ENCODE measurements at regions of chr7 and their contacts with region 1.

Region 1: GRCh38 chr7:29105752-29106668 is 40.3 kb downstream of the CPVL start:
- DNase-seq: no peak
- H3K4me3 ChIP-seq: no peak overlapping the region
- H3K27ac ChIP-seq: no peak overlapping the region
- H3K4me1 ChIP-seq: no peaks in the 10 kb centered on the region
- H3K27me3 ChIP-seq: no peaks in the 10 kb centered on the region
- CTCF ChIP-seq: peak; percentile 57 to 77 (median 72)
- EP300 ChIP-seq: no peak
- POLR2A ChIP-seq: no peak

Region 2: DNA sequence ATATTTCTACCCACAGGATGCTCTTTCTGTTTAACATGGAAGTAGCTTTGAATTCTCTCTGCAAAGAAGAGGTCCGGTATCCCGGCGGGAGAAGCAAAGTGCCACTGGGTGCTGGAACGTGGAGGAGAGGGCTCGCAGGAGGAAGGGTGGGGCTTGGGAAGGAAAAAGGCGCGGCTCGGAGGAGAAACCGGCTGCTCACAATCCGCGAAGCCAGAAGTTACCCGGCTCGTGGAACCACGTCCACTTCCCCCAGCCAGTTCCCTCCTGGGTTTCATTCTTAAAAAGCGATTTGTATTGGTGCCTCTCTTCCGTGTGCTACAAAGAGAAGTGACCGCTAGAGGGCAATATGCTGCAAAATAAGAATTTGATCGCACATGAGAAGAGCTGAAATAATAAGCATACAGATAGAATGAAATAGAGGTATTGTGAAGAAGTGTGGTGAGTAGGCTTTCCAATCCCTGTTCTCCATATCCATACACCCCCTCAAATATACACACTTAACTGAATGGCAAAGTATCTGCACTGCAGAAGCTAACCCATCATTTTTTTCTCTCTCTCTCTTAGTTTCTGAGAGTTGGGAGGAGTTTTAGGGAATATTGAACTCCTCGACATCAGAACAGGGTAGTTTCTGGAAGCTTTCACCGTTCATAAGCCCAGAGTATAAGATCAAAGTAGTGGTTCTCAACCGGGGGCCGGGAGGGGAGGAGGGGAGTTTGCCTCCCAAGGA is 179.0 kb before region 1 on chr7:
- intact Hi-C with region 1: loop called (anchors 1 kb)
- DNase-seq: peak; percentile 85
- H3K4me3 ChIP-seq: peak overlapping the region; percentile 13 to 52 (median 50)
- H3K27ac ChIP-seq: peak overlapping the region in 3 of 4 donors; percentile 10 to 54 (median 42)
- H3K4me1 ChIP-seq: peaks cover 0 to 16% (median 11%) of the 10 kb centered on the region in 4 donors
- H3K27me3 ChIP-seq: peaks cover 0 to 19% (median 0%) of the 10 kb centered on the region in 3 donors
- CTCF ChIP-seq: peak; percentile 56 to 80 (median 74)
- EP300 ChIP-seq: no peak
- POLR2A ChIP-seq: no peak

Region 3: DNA sequence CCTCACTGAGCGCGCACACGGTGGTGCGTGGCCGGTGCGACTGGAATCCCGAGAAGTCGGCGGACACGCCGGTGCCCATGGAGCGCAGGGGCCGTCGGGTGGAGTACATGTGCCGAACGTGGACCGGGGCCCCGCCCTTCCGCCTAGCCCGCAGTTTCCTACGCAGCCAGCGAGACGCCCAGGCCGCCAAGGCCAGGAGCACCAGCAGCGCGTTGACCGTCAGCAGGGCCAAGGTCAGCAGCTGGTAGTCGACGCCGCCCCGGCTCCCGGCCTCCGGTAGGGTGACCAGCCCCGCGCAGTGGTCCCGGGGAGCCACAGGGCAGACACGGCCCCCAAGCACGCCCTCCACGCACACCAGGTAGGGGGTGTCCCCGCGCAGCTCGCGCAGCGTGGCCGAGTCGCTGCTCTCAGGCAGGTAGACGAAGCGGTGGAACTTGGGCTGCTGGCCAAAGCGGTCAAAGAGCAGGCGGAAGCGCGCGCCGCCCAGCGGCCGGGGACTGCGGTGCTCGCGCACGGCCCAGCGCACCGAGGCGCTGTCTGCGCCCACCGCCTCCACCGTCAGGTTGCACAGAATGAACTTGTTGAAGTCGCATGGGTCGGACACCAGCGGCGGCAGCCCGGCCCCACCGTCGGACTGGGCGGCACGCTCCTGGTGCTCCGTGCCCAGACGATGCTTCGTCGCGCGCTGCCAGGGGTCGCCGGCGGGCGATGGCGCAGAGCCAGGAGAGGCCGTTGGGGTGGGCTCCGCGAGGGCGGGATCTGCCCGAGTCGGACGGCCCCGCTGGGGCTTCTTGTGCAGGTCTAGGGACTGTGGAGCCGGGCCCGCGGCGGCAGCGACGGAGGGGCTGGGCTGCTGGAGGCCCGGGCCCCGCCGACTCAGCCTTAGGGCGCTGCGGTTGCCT is 150.0 kb before region 1 on chr7:
- intact Hi-C with region 1: loop called (anchors 10 kb)
- DNase-seq: peak; percentile 89
- H3K4me3 ChIP-seq: peak overlapping the region; percentile 26 to 58 (median 48)
- H3K27ac ChIP-seq: peak overlapping the region in 3 of 4 donors; percentile 50 to 73 (median 69)
- H3K4me1 ChIP-seq: peaks cover 0 to 53% (median 43%) of the 10 kb centered on the region in 4 donors
- H3K27me3 ChIP-seq: peaks cover 16 to 55% (median 25%) of the 10 kb centered on the region in 3 donors
- CTCF ChIP-seq: peak; percentile 27 to 52 (median 40)
- EP300 ChIP-seq: no peak
- POLR2A ChIP-seq: no peak

Region 4: GRCh38 chr7:29045258-29046086 is 60.5 kb before region 1 on chr7:
- intact Hi-C with region 1: no loop called
- DNase-seq: no peak
- H3K4me3 ChIP-seq: no peak overlapping the region
- H3K27ac ChIP-seq: no peak overlapping the region
- H3K4me1 ChIP-seq: no peaks in the 10 kb centered on the region
- H3K27me3 ChIP-seq: no peaks in the 10 kb centered on the region
- CTCF ChIP-seq: no peak
- EP300 ChIP-seq: no peak
- POLR2A ChIP-seq: no peak

Region 5: GRCh38 chr7:29071203-29071874 is 34.7 kb before region 1 on chr7:
- intact Hi-C with region 1: no loop called
- DNase-seq: no peak
- H3K4me3 ChIP-seq: no peak overlapping the region
- H3K27ac ChIP-seq: no peak overlapping the region
- H3K4me1 ChIP-seq: no peaks in the 10 kb centered on the region
- H3K27me3 ChIP-seq: no peaks in the 10 kb centered on the region
- CTCF ChIP-seq: no peak
- EP300 ChIP-seq: no peak
- POLR2A ChIP-seq: no peak

Region 6: DNA sequence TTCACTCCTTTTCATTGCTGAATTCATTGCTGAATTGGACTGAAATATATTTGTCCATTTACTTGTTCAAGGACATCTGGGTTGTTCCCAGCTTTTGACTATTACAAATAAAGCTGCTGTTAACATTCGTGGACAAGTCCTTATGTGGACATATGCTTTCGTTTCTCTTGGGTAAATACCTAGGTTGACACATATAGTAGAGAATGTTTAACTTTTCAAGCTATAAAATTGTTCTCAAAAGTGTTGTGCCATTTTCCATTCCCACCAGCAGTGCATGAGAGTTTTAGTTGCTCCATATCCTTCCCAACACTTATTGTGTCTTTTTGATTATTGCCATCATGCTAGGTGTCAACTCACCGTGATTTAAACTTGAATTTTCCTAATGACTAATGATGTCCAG is 57.8 kb after region 1 on chr7:
- intact Hi-C with region 1: no loop called
- DNase-seq: no peak
- H3K4me3 ChIP-seq: no peak overlapping the region
- H3K27ac ChIP-seq: no peak overlapping the region
- H3K4me1 ChIP-seq: no peaks in the 10 kb centered on the region
- H3K27me3 ChIP-seq: no peaks in the 10 kb centered on the region
- CTCF ChIP-seq: no peak
- EP300 ChIP-seq: no peak
- POLR2A ChIP-seq: no peak

Region 7: DNA sequence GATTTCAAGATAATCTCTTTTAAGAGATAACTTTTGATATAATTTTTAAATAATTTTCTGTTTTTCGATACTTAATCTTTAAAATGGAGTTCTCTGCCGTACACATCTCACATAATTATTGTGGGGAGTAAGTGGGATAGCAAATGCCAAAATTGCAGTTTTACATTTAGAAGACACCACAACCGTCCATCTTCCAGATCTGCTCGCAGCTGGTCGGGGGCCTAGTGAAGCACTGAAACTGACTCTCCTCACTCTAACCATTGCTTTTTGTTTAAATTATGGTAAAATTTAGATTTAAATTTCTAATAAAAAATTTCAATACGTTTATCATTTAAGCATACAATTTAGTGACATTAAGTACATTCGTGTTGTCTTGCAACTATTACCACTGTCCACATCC is 551.8 kb after region 1 on chr7:
- intact Hi-C with region 1: no loop called
- DNase-seq: no peak
- H3K4me3 ChIP-seq: no peak overlapping the region
- H3K27ac ChIP-seq: no peak overlapping the region
- H3K4me1 ChIP-seq: no peaks in the 10 kb centered on the region
- H3K27me3 ChIP-seq: no peaks in the 10 kb centered on the region
- CTCF ChIP-seq: no peak
- EP300 ChIP-seq: no peak
- POLR2A ChIP-seq: no peak

Measured in sigmoid colon (tissue), 7 donors.